Activated CD4-positive, alpha-beta T cell treated with anti-CD3 and anti-CD28 coated beads for 36 hours (primary cell): ENCODE measurements at regions of chr17 and their contacts with region 1.

Region 1: DNA sequence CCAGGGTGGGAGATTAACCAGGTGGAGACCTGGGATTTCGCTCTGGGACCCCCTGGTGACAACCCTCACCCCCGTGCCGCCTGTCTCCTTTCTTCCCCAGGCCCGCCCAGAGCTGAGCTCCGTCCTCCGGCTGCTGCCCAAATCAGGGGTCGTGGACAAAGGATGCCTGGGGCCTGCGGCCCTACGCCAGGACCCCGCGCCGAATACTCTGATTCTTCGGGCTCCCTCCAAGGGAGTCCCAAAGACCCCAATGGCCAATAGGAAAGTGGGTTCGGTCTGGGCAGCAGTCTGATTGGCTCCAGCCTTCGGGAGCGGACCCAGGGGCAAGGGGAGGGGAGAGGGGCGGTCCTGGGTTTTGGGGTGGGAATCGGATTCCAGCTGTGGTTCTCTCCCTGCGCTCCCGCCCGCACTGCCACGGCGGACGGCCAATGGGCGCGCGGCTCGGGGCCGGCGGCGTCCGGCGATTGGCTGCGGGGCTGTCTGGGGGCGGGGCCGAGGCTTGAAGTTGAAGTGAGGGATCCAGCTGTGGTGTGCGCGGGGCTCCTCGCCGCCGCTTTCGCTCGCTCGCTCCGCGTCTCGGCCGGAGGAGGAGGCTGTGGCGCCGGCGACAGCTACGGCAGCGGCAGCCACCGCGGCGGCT is at the start of gene CACNA1G:
- DNase-seq: peak; percentile 93
- ATAC-seq: peak; percentile 94
- H3K4me3 Mint-ChIP-seq: peak within 1 kb of the TSS; percentile 55
- H3K27ac Mint-ChIP-seq: no peak within 1 kb of the TSS
- H3K4me1 Mint-ChIP-seq: peaks cover 21% of the 10 kb centered on the region
- H3K27me3 Mint-ChIP-seq: peaks cover 51% of the 10 kb centered on the region
- total RNA-seq, gene CACNA1G: not detected

Region 2: DNA sequence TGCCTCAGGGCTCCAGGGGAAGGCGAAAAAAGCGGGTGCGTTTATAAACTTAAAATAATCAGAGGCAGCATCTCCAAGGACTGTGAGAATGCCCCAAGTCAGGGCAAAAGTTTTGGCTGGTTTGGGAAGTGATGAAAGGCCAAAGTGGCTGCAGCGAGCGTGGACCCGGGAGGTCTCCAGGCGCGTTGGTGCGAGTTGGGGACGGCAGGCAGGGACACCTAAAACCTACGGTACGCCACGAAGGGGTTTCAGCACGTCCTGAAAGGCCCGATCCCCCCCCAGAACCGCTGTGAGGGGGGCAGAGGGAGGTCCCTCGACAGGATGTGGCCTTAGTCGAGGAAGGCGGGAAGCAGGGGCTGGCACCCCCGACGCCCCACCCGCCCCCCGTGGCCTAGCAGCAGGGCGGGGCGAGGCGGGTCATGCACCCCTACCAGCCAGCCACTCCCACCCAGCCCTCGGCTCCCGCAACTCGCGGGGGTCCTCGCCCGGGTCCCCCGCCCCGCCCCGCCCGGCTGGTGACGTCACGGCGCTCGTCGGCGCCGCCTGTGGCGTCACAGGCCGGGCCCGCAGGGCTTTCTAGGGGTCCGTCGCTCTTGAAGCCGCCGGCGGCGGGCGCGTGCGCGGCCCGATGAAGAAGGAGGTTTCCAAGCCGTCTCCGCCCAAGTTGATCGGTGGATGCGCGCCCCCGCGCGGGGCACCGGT is 52.3 kb before region 1 on chr17 and contains the start of gene MYCBPAP:
- CTCF ChIA-PET with region 1: interaction called, 4 read pairs
- POLR2A ChIA-PET with region 1: no interaction called
- intact Hi-C with region 1: loop called in 1 of 2 experiments (anchors 1 kb)
- DNase-seq: peak; percentile 85
- ATAC-seq: peak; percentile 38
- H3K4me3 Mint-ChIP-seq: peak within 1 kb of the TSS; percentile 72
- H3K27ac Mint-ChIP-seq: peak within 1 kb of the TSS; percentile 77
- H3K4me1 Mint-ChIP-seq: peaks cover 34% of the 10 kb centered on the region
- H3K27me3 Mint-ChIP-seq: peaks cover 4% of the 10 kb centered on the region
- total RNA-seq, gene MYCBPAP: 1.4 to 1.8 TPM

Region 3: DNA sequence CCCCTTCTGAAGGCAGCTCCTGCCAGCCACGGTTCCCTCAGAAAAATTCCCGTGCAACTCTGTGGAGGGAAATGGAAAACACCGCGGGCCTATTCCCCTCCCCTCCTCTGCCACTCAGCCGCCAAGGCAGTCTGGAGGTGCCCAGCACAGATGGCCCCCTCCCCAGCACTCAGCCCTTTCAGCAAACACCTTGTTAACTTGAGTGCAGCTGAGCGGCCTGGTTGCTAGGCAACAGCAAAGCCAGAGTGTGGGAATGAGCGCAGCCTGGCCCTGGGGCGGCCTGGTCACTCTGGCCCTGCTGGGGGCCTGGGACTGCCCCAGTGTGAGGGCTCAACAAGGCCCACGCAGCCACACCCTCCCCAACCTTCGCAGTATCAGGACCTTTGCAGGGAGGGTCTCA is 33.0 kb after region 1 on chr17:
- CTCF ChIA-PET with region 1: no interaction called
- POLR2A ChIA-PET with region 1: no interaction called
- intact Hi-C with region 1: no loop called
- DNase-seq: no peak
- ATAC-seq: no peak
- H3K4me3 Mint-ChIP-seq: no peak overlapping the region
- H3K27ac Mint-ChIP-seq: no peak overlapping the region
- H3K4me1 Mint-ChIP-seq: no peaks in the 10 kb centered on the region
- H3K27me3 Mint-ChIP-seq: no peaks in the 10 kb centered on the region

Region 4: GRCh38 chr17:51289696-51290111 is 729.4 kb after region 1 on chr17:
- CTCF ChIA-PET with region 1: no interaction called
- POLR2A ChIA-PET with region 1: no interaction called
- intact Hi-C with region 1: no loop called
- DNase-seq: no peak
- ATAC-seq: no peak
- H3K4me3 Mint-ChIP-seq: no peak overlapping the region
- H3K27ac Mint-ChIP-seq: no peak overlapping the region
- H3K4me1 Mint-ChIP-seq: peaks cover 8% of the 10 kb centered on the region
- H3K27me3 Mint-ChIP-seq: no peaks in the 10 kb centered on the region